Natural killer cell (primary cell): ENCODE measurements at regions of chr3 and their contacts with region 1.

Region 1: DNA sequence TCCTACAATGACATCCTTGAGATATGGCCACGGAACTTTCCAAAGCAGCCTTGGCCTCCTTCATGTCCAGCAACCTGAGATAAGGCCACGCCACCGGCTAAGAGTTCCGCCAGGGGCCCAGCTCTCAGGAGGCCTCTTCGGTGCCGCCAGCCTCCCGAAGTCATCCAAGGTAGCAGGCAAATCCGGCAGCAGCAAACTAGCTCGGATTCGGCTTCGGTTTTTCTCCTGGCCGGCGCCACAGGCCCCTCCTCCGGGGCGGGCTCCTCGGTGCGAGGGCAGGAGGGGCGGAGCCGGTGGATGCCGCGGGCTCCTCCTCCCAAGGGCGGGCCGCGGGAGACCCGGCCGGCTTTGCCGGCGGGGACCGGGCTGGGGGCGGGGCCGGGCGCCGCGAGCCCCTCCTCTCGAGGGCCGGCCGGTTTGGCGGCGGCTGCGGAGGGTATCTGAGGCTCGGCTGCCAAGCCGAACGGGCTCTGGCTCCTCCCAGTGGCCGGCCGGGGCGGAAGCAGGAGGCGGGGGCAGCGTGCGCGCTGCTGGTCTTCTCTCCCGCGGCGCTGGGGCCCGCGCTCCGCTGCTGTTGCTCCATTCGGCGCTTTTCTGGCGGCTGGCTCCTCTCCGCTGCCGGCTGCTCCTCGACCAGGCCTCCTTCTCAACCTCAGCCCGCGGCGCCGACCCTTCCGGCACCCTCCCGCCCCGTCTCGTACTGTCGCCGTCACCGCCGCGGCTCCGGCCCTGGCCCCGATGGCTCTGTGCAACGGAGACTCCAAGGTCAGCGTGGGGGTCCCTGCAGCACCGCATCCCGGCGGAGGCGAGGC is at the start of gene GMPS:
- DNase-seq: peak; percentile 96 to 97
- ATAC-seq: peak; percentile 90 to 98 (median 92)
- H3K4me3 ChIP-seq: peak within 1 kb of the TSS; percentile 92
- H3K4me3 Mint-ChIP-seq: peak within 1 kb of the TSS; percentile 95
- H3K27ac ChIP-seq: peak within 1 kb of the TSS; percentile 95
- H3K27ac Mint-ChIP-seq: peak within 1 kb of the TSS; percentile 90 to 96
- H3K4me1 ChIP-seq: peaks cover 9% of the 10 kb centered on the region
- H3K4me1 Mint-ChIP-seq: peaks cover 18 to 20% of the 10 kb centered on the region in 2 donors
- H3K27me3 ChIP-seq: no peaks in the 10 kb centered on the region
- H3K27me3 Mint-ChIP-seq: no peaks in the 10 kb centered on the region
- CTCF ChIP-seq: peak; percentile 43
- total RNA-seq, gene GMPS: 36.7 to 49.7 (median 45.4) TPM

Region 2: DNA sequence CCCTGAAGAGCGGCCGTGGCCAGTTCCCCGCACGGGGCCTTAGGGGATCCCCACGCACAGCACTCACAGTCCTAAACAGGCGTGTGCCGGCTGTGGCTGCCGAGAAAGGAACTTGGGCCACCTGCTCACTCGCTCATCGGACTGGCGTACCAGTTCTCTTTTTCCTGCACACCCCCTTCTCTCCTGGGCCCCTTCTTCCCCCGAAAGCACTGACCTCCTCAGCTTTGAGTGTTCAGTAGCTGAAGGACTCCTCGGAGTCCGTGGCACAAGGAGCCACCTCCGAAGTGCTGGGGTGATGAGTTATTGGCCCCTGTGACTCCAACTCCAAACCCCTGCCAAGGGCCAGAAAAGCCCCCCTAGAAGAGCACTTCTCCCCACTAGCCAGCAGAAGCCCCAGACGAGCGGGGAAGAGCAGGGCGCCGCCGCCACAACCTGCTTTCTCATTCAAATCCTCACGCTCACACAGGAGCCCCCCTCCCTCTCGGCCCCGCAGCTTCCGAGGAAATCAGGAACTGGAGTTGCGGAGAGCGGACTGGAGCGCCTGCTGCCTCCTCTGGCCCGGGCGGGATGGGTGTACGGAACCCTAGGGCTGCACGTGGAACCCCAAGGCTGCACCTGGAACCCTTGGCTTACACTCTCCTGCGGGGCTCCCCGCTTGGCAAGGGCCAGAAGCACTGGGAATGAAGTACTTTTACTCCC is 125.6 kb before region 1 on chr3 and contains the start of gene PLCH1:
- intact Hi-C with region 1: loop called (anchors 10 kb)
- DNase-seq: peak; percentile 21 to 53
- ATAC-seq: peak; percentile 68 to 73 (median 69)
- H3K4me3 ChIP-seq: peak within 1 kb of the TSS; percentile 36
- H3K4me3 Mint-ChIP-seq: peak within 1 kb of the TSS; percentile 94
- H3K27ac ChIP-seq: no peak within 1 kb of the TSS
- H3K27ac Mint-ChIP-seq: peak within 1 kb of the TSS in 1 of 2 donors; percentile 79
- H3K4me1 ChIP-seq: peaks cover 19% of the 10 kb centered on the region
- H3K4me1 Mint-ChIP-seq: peaks cover 17 to 24% of the 10 kb centered on the region in 2 donors
- H3K27me3 ChIP-seq: peaks cover 35% of the 10 kb centered on the region
- H3K27me3 Mint-ChIP-seq: peaks cover 45 to 71% of the 10 kb centered on the region in 2 donors
- CTCF ChIP-seq: no peak
- total RNA-seq, gene PLCH1: 0.05 to 0.26 (median 0.08) TPM

Region 3: GRCh38 chr3:155792532-155792931 is 77.8 kb before region 1 on chr3:
- intact Hi-C with region 1: no loop called
- DNase-seq: no peak
- ATAC-seq: no peak
- H3K4me3 ChIP-seq: no peak overlapping the region
- H3K4me3 Mint-ChIP-seq: no peak overlapping the region
- H3K27ac ChIP-seq: no peak overlapping the region
- H3K27ac Mint-ChIP-seq: no peak overlapping the region
- H3K4me1 ChIP-seq: no peaks in the 10 kb centered on the region
- H3K4me1 Mint-ChIP-seq: no peaks in the 10 kb centered on the region
- H3K27me3 ChIP-seq: no peaks in the 10 kb centered on the region
- H3K27me3 Mint-ChIP-seq: no peaks in the 10 kb centered on the region
- CTCF ChIP-seq: no peak

Region 4: DNA sequence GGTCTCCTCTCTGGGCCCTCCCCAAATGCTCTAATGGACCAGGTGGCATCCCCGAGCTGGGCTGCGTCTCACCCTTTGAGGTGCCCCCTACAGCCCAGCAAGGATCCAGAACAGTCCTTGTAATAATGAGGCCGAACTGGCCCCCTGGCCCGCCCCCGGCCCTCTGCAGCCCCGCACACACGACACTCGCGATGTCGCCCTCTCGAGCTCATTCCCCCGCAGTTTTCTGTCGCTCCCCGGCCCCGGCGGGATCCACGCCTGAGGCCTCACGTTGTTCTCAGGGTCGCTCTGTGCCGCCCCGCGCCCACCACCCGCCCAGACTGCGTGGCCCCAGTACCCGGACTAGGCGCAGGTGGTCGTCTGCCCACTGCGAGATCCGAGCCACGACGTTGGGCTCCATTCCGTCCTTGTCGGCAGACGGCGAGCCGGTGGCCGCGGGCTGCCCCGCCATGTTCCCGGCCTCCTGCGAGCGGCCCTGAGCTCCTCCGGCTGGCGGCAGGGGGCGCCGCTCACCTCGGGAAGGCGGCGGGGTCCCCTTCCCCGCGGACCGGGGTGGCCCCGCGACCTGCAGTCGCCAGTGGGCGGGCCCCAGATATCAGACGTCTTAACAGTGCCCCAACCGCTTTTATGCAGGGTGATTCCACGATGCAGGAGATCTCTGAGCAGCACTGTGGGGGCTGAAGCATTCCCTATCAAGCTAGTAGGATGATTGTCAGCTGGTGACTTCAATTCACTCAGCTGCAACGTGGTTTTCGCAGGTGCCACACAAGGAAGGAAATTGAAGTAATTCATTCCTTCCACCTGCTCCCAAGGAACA is 64.3 kb before region 1 on chr3 and contains the start of gene C3orf33:
- intact Hi-C with region 1: loop called (anchors 2 kb)
- DNase-seq: peak; percentile 74 to 88
- ATAC-seq: peak; percentile 96 to 97 (median 96)
- H3K4me3 ChIP-seq: peak within 1 kb of the TSS; percentile 59
- H3K4me3 Mint-ChIP-seq: peak within 1 kb of the TSS; percentile 86
- H3K27ac ChIP-seq: peak within 1 kb of the TSS; percentile 52
- H3K27ac Mint-ChIP-seq: peak within 1 kb of the TSS; percentile 27 to 91
- H3K4me1 ChIP-seq: peaks cover 14% of the 10 kb centered on the region
- H3K4me1 Mint-ChIP-seq: peaks cover 10 to 19% of the 10 kb centered on the region in 2 donors
- H3K27me3 ChIP-seq: no peaks in the 10 kb centered on the region
- H3K27me3 Mint-ChIP-seq: peaks cover 8 to 10% of the 10 kb centered on the region in 2 donors
- CTCF ChIP-seq: peak; percentile 91
- total RNA-seq, gene C3orf33: 0.88 to 2.5 (median 1.2) TPM